ENCODE measurements at regions of chr17 and their contacts with region 1.

Region 1: GRCh38 chr17:55717898-55718735 is 4.5 kb downstream of the TMEM100 start:
- DNase-seq: peak; percentile 72
- H3K4me3 ChIP-seq: no peak overlapping the region
- H3K27ac ChIP-seq: no peak overlapping the region
- H3K4me1 ChIP-seq: peaks cover 2% of the 10 kb centered on the region
- H3K27me3 ChIP-seq: peaks cover 0 to 4% of the 10 kb centered on the region in 2 experiments
- CTCF ChIP-seq: peak; percentile 60 to 66
- POLR2A ChIP-seq: no peak

Region 2: DNA sequence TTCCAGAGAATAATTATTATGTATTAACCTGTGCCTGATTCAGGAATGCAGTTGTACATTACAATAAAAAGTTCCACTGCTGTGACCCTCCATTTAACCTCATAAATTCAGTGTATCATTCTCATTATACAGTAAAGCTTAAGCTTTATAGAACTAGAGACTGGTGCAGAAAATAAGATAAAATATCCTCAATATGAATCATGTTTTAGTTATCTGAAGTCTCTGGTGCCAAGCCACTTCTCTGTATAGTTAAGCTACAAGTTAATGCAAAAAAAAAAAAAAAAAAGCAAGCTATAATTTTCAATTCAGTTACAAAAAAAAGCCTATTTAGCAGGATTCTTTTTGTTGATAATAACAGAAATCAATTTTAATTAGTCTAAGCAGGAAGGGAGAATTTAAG is 184.5 kb before region 1 on chr17:
- CTCF ChIA-PET with region 1: interaction called, 12 read pairs
- POLR2A ChIA-PET with region 1: no interaction called
- dilution Hi-C with region 1: no loop called
- intact Hi-C with region 1: no loop called
- DNase-seq: peak; percentile 28
- H3K4me3 ChIP-seq: no peak overlapping the region
- H3K27ac ChIP-seq: no peak overlapping the region
- H3K4me1 ChIP-seq: peaks cover 18% of the 10 kb centered on the region
- H3K27me3 ChIP-seq: no peaks in the 10 kb centered on the region
- CTCF ChIP-seq: no peak
- POLR2A ChIP-seq: no peak

Region 3: DNA sequence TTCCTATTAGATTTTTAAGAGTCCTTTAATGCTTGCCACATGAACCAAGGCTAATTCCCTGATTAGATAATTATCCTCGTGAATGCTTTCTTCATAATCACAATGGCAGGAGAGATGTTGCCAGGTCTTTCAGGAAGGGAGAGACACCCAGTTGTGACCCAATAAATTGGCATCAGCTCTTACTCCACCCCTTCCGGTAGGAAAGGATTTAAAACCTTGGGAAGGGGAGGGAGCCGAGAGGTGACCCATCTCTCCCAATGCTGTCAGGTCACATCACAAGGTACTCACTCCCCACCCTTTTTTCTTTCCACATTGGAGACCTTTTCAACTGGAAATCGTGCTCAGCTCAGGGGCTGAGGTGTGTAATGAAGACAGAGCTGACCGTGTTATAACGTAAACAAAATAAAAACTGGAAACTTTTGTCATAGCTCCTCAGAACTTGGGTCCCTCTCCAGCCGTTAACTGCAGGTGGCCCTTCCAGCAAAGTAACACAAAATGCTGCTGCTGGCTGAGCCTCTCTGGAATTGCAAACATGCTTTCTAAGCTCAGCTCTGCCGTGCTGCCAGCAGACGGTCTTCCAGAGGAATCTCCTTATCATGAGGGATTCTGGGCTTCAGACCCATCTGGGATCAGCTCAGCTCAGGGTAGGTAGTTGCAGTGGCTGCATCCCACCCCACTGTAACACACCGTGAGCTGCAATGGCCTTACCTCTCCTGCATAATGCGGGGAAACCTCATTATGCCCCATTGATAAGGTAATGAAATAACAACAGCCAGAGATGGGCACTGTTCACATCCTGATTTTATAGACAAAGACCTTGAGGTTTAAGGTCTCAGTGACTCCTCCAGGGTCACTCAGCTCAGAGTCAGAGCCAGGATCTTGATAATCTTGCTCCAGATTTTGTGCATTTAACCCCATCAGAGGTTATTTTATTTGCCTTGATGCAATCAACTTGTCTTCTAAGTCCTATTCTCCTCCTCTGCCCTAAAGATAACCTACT is 11.0 kb before region 1 on chr17:
- CTCF ChIA-PET with region 1: interaction called, 10 read pairs
- POLR2A ChIA-PET with region 1: no interaction called
- dilution Hi-C with region 1: no loop called
- intact Hi-C with region 1: no loop called
- DNase-seq: no peak
- H3K4me3 ChIP-seq: no peak overlapping the region
- H3K27ac ChIP-seq: no peak overlapping the region
- H3K4me1 ChIP-seq: no peaks in the 10 kb centered on the region
- H3K27me3 ChIP-seq: no peaks in the 10 kb centered on the region
- CTCF ChIP-seq: no peak
- POLR2A ChIP-seq: no peak

Region 4: GRCh38 chr17:55735731-55736405 is 17.8 kb after region 1 on chr17:
- CTCF ChIA-PET with region 1: interaction called, 45 read pairs
- POLR2A ChIA-PET with region 1: no interaction called
- dilution Hi-C with region 1: no loop called
- intact Hi-C with region 1: no loop called
- DNase-seq: peak; percentile 32
- H3K4me3 ChIP-seq: no peak overlapping the region
- H3K27ac ChIP-seq: no peak overlapping the region
- H3K4me1 ChIP-seq: no peaks in the 10 kb centered on the region
- H3K27me3 ChIP-seq: no peaks in the 10 kb centered on the region
- CTCF ChIP-seq: peak; percentile 44 to 54
- POLR2A ChIP-seq: no peak

Measured in endothelial cell of umbilical vein (primary cell).